Endothelial cell of umbilical vein (primary cell): ENCODE measurements at regions of chr7 and their contacts with region 1.

Region 1: DNA sequence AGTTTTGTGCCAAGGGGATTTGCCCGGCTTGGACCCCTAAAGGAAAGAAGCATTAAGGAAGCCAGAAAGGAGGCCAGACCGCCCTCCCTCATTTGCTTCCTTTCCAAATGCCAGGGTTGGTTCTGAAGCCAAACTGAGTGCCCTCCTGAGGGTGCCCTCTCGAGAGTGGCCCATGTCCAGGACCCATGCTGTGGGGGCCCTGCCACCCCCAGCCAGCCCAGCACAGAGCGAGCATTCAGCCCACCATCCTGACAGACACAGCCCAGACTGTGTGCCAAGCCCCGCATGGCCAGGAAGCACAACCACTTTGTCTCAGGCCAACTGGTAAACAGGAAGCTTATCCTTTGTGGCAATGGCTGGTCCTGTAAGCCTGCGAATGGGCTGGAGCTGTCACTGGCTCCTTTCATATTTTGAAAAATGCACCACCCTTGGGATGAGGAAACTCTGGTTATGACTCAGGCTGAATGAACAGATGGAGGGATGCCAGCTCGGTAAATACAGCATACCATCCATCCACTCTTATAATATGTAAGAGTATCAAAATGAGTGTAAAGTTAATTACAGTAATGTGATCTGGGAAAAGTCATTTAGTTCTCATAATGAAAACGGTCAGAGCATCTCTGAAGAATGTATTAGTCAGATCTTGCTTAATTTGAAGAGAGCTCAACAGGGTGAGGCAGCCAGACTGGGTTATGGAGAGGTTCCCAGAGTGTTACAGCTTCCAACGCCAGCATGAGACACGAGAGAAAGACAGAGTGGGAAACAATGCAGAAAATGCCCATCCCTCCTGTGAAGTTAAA is 65.0 kb downstream of the STK17A start:
- DNase-seq: peak; percentile 98
- H3K4me3 ChIP-seq: peak overlapping the region in 1 of 3 experiments; percentile 52
- H3K27ac ChIP-seq: peak overlapping the region; percentile 97
- H3K4me1 ChIP-seq: peaks cover 74% of the 10 kb centered on the region
- H3K27me3 ChIP-seq: no peaks in the 10 kb centered on the region
- CTCF ChIP-seq: no peak
- POLR2A ChIP-seq: no peak

Region 2: DNA sequence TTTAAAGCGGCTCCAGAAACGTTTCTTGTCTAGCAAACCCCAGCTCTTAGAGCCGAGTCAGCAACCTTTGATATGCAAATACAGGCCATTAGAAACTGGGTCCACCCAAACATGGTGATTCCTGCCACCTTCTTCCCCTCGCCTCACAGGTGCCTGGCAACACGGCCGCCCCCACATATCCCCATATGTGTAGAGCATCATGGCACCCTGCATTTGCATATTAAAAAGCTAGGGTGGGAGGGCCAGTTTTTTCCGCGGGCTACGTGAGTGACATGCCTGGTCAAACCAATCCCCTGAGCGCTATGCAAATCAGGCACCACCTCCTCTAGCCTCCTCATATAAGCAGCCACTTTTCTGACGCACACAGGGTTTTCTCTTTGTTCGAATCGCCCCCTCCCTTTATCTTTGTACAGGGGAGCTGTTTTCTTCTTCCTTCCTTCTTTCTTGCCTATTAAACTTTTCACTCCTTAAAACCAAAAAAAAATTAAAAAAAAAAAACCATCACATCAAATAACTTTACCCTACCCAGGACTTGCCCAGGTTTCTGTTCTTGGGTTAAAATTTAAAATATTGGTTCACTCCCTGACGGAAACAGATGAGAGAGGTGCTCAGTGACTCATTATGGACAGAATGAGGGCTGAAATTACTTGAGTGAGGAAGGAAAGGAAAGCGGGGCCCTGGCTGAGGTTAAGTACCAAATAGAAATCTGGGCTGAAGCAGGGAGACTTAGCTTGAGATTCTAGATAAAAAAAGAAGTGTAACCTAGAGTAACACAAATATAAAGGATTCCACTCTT is 21.6 kb after region 1 on chr7:
- CTCF ChIA-PET with region 1: interaction called, 4 read pairs
- POLR2A ChIA-PET with region 1: interaction called, 6 read pairs
- dilution Hi-C with region 1: no loop called
- intact Hi-C with region 1: loop called (anchors 1 kb)
- DNase-seq: peak; percentile 33
- H3K4me3 ChIP-seq: no peak overlapping the region
- H3K27ac ChIP-seq: peak overlapping the region; percentile 9
- H3K4me1 ChIP-seq: peaks cover 22% of the 10 kb centered on the region
- H3K27me3 ChIP-seq: no peaks in the 10 kb centered on the region
- CTCF ChIP-seq: no peak
- POLR2A ChIP-seq: no peak

Region 3: GRCh38 chr7:43674584-43675436 is 26.9 kb after region 1 on chr7:
- CTCF ChIA-PET with region 1: no interaction called
- POLR2A ChIA-PET with region 1: no interaction called
- dilution Hi-C with region 1: no loop called
- intact Hi-C with region 1: loop called (anchors 1 kb)
- DNase-seq: peak; percentile 83
- H3K4me3 ChIP-seq: no peak overlapping the region
- H3K27ac ChIP-seq: peak overlapping the region; percentile 64
- H3K4me1 ChIP-seq: peaks cover 20% of the 10 kb centered on the region
- H3K27me3 ChIP-seq: no peaks in the 10 kb centered on the region
- CTCF ChIP-seq: no peak
- POLR2A ChIP-seq: no peak

Region 4: GRCh38 chr7:43693687-43694398 is 46.0 kb after region 1 on chr7:
- CTCF ChIA-PET with region 1: interaction called, 130 read pairs
- POLR2A ChIA-PET with region 1: interaction called, 15 read pairs
- dilution Hi-C with region 1: no loop called
- intact Hi-C with region 1: loop called (anchors 1 kb)
- DNase-seq: peak; percentile 73
- H3K4me3 ChIP-seq: no peak overlapping the region
- H3K27ac ChIP-seq: peak overlapping the region; percentile 59
- H3K4me1 ChIP-seq: peaks cover 16% of the 10 kb centered on the region
- H3K27me3 ChIP-seq: no peaks in the 10 kb centered on the region
- CTCF ChIP-seq: no peak
- POLR2A ChIP-seq: no peak